IMR-90 (cell line): ENCODE measurements at regions of chr3 and their contacts with region 1.

Region 1: GRCh38 chr3:179589143-179589542 is 15.3 kb downstream of the MRPL47 start:
- DNase-seq: peak; percentile 73
- ATAC-seq: no peak
- H3K4me3 ChIP-seq: no peak overlapping the region
- H3K27ac ChIP-seq: no peak overlapping the region
- H3K4me1 ChIP-seq: peaks cover 2% of the 10 kb centered on the region; the same call in 1 of the 2 replicates
- H3K27me3 ChIP-seq: no peaks in the 10 kb centered on the region
- CTCF ChIP-seq: no peak
- POLR2A ChIP-seq: no peak
- RAD21 ChIP-seq: no peak

Region 2: DNA sequence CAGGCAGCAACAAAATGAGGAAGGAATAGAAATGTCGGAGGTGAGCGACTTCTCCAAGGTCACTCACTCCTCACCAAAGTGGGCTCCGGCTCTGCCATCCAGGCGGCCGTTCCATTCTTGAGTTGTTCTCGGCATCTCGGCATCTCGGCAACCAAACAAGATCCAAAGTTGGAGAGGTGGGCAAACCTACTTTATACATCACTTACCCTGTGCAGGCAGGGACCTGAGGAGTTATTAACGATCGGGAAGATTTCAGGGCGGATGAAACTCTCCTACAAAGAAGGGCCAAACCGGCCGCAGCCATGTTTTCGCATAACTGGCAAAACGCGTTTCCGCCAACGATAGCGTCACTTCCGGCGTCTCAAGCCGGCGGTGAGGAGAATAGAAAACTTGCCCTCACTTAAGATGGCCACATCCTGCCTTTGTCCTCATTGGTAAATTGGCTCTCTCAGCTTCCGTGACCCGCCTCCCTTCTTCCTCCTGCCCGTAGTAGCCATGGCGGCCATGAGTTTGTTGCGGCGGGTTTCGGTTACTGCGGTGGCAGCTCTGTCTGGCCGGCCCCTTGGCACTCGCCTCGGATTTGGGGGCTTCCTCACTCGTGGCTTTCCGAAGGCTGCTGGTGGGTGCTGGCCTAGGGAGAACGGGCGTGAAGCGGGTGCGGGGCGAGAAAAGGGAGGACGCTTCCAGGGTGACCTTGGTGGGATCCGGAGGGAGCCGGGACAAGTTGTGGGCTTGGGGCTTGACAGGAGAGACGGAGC is 15.4 kb after region 1 on chr3 and contains the starts of genes MRPL47 and NDUFB5:
- CTCF ChIA-PET with region 1: no interaction called
- POLR2A ChIA-PET with region 1: interaction called, 3 read pairs
- dilution Hi-C with region 1: no loop called
- in situ Hi-C with region 1: no loop called
- intact Hi-C with region 1: loop called (anchors 1 kb)
- DNase-seq: peak; percentile 97
- ATAC-seq: peak; percentile 100
- H3K4me3 ChIP-seq: peak within 1 kb of the TSS; percentile 85
- H3K27ac ChIP-seq: peak within 1 kb of the TSS; percentile 92
- H3K4me1 ChIP-seq: no peaks in the 10 kb centered on the region; the same call in 1 of the 2 replicates
- H3K27me3 ChIP-seq: no peaks in the 10 kb centered on the region
- CTCF ChIP-seq: no peak
- POLR2A ChIP-seq: peak; percentile 93
- RAD21 ChIP-seq: no peak
- total RNA-seq, gene MRPL47: 41.4 and 47.2 TPM in 2 replicates
- total RNA-seq, gene NDUFB5: 17.2 and 40.0 TPM in 2 replicates